ENCODE measurements at regions of chr3 and their contacts with region 1.

Region 1: DNA sequence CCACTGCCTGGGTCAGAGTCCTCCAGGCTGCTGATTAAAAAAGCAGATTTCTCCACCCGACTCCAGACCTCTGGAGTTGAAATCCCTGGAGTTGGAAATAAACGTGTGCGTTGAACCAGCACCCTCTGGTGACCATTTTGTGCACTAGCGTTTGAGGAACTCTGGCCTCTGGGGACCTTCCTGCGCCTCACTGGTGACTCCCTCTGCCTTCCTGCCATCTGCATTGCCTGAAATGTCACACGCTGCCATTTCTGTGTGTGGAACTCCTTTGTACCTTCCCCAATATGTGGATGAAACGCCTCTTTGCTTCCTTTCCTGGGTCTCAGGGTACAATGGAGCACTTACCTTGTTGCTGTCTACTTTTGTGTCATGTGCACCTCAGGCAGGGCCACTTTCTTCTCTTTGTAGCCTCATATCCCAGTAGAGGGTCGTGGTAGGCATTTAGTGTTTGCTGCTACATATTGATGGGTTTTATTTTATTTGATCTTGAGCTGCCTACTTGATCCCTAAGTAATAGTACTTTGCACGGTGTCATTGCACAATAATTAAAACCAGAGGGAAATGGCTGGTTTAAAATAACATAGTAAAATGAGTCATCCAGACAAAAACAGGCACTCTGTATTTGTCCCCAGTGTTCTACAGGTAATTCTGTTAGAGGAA is 56.8 kb downstream of the GPR171 start:
- DNase-seq: peak; percentile 74
- ATAC-seq: peak; percentile 97
- H3K4me3 Mint-ChIP-seq: no peak overlapping the region
- H3K27ac Mint-ChIP-seq: no peak overlapping the region
- H3K4me1 Mint-ChIP-seq: no peaks in the 10 kb centered on the region
- H3K27me3 Mint-ChIP-seq: peaks cover 3% of the 10 kb centered on the region

Region 2: DNA sequence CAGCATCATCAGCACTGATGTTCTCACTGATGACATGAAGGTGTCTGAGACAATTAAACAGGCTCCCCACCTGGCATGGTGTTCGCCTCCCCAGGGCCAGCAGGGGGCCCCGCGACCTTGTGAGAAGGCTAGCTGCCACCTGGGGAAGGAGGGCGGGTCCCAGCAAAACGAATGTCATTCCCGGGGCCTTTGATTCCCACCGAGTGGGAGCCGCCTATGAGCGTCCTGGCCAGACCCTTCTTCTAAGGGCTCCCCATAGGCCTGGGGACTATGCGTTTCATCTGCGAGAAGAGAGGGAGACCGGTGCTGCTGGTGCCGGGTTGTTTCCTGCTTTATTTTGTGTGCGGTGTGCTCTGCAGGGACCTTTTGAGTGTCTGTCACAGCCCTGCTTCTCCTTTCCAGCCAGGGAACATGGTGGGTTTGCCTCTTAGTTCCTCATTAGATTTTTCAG is 220.4 kb before region 1 on chr3:
- CTCF ChIA-PET with region 1: interaction called, 11 read pairs
- POLR2A ChIA-PET with region 1: no interaction called
- intact Hi-C with region 1: loop called (anchors 1 kb)
- DNase-seq: peak; percentile 80
- ATAC-seq: peak; percentile 93
- H3K4me3 Mint-ChIP-seq: peak overlapping the region; percentile 19
- H3K27ac Mint-ChIP-seq: no peak overlapping the region
- H3K4me1 Mint-ChIP-seq: no peaks in the 10 kb centered on the region
- H3K27me3 Mint-ChIP-seq: peaks cover 7% of the 10 kb centered on the region

Region 3: GRCh38 chr3:151067158-151067557 is 79.0 kb before region 1 on chr3:
- CTCF ChIA-PET with region 1: interaction called, 16 read pairs
- POLR2A ChIA-PET with region 1: no interaction called
- intact Hi-C with region 1: loop called (anchors 1 kb)
- DNase-seq: peak; percentile 17
- ATAC-seq: peak; percentile 36
- H3K4me3 Mint-ChIP-seq: no peak overlapping the region
- H3K27ac Mint-ChIP-seq: no peak overlapping the region
- H3K4me1 Mint-ChIP-seq: no peaks in the 10 kb centered on the region
- H3K27me3 Mint-ChIP-seq: no peaks in the 10 kb centered on the region